ENCODE measurements at regions of chr10 and their contacts with region 1.

Region 1: DNA sequence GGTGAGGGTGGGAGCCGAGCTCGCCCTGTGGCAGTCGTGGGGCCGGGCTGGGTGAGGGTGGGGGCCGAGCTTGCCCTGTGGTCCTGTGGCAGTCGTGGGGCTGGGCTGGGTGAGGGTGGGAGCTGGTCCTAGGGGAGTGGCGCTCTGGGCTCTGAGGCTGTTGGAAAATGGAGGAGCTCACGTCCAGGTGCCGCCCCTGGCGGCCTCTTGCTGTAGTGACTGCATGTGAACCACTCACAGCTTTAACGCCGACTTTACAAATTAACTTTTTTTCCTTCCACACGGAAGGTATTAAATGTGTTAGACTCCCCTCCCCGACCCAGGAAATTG is 312.6 kb downstream of the WDR37 start:
- H3K4me3 ChIP-seq: no peak overlapping the region
- H3K27ac ChIP-seq: no peak overlapping the region
- H3K4me1 ChIP-seq: no peaks in the 10 kb centered on the region
- CTCF ChIP-seq: no peak

Region 2: GRCh38 chr10:970311-971149 is 398.3 kb before region 1 on chr10:
- CTCF ChIA-PET with region 1: no interaction called
- POLR2A ChIA-PET with region 1: no interaction called
- H3K4me3 ChIP-seq: no peak overlapping the region
- H3K27ac ChIP-seq: no peak overlapping the region
- H3K4me1 ChIP-seq: no peaks in the 10 kb centered on the region
- CTCF ChIP-seq: no peak

Region 3: DNA sequence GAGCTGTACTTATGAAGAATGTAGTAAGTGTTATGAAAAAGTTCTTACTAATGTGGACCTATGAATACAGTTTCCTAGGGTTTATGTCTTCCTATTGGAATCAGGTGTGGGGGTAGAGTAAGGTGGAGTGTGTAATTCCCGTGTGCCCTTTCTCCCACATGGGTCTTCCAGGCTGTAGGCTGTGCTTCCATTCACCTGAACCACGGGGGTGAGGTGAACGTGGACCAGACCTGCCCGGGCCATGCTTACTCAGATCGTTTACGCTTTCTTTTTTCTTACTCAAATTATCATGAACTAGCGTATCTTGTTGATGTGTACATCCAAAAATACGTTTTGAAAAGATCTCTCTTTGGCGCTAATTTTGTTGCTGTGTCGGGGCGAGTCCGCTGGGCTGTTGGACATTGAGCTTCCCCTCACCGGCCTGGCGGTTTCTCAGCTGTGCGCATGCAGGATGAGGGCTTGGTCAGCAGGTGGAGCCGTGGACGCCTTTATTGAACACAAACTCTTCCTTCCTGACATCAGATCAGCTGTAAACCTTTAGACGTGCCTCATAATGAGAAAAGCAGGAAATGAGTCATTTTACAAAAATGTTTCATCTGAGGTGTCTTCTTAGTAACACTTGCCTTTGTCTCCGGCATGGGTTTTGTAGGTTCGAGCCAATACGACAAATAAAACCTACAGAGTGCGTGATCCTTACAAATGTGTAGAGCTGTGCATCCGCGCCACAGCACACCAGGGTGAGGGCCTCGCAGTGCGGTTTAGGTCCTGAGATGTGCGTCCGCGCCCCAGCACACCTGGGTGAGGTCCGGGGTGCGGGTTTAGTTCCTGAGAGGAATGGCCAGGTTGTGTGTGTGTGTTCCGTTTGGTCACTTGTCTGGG is 258.8 kb before region 1 on chr10:
- CTCF ChIA-PET with region 1: interaction called, 10 read pairs
- POLR2A ChIA-PET with region 1: no interaction called
- H3K4me3 ChIP-seq: no peak overlapping the region
- H3K27ac ChIP-seq: no peak overlapping the region
- H3K4me1 ChIP-seq: no peaks in the 10 kb centered on the region
- CTCF ChIP-seq: no peak

Region 4: GRCh38 chr10:1198453-1199341 is 170.1 kb before region 1 on chr10:
- CTCF ChIA-PET with region 1: no interaction called
- POLR2A ChIA-PET with region 1: no interaction called
- H3K4me3 ChIP-seq: no peak overlapping the region
- H3K27ac ChIP-seq: no peak overlapping the region
- H3K4me1 ChIP-seq: no peaks in the 10 kb centered on the region
- CTCF ChIP-seq: no peak

Region 5: DNA sequence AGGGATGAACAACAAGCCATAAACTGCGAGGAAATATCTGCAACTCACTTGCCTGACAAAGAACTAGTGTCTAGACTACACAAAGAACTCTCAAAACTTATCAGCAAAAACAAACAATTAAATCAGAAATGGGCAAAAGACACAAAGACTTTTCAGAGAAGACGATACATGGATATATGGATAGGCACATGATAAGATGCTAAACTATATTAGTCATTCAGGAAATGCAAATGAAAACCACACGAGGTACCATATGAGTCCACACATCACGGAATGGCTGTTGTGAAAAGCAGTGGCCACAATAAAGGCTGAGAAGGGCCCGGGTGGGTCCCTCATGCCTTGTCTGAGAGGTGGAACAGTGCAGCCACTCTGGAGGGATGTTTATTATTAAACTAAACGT is 44.9 kb before region 1 on chr10:
- CTCF ChIA-PET with region 1: no interaction called
- POLR2A ChIA-PET with region 1: no interaction called
- H3K4me3 ChIP-seq: no peak overlapping the region
- H3K27ac ChIP-seq: no peak overlapping the region
- H3K4me1 ChIP-seq: no peaks in the 10 kb centered on the region
- CTCF ChIP-seq: no peak

Region 6: DNA sequence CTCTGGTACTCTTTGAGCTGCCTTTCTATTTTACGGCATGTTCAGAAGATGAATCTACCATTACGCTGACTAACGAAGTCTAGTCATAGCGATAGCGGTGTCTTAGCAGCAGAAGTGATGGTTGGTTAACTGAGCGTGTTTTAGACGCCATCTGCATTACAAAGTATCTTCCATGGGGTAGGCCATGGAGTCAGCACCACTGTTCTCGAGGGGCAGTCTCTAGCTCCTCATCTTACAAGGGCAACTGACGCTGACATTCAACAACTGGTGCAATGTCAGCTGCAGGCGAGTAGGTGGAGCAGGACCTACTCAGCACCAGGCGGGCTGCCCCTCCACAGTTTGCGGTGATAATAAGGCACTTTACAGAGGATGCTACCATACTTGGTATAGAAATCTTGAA is 279.8 kb after region 1 on chr10:
- CTCF ChIA-PET with region 1: no interaction called
- POLR2A ChIA-PET with region 1: no interaction called
- H3K4me3 ChIP-seq: no peak overlapping the region
- H3K27ac ChIP-seq: no peak overlapping the region
- H3K4me1 ChIP-seq: no peaks in the 10 kb centered on the region
- CTCF ChIP-seq: no peak

Measured in HEK293 (cell line).